Activated naive CD4-positive, alpha-beta T cell treated with anti-CD3 and anti-CD28 coated beads for 36 hours (primary cell): ENCODE measurements at regions of chr14 and their contacts with region 1.

Region 1: GRCh38 chr14:34982417-34983147 is at the start of gene SRP54:
- DNase-seq: peak; percentile 100
- H3K4me3 Mint-ChIP-seq: no peak within 1 kb of the TSS
- H3K27ac Mint-ChIP-seq: no peak within 1 kb of the TSS
- H3K4me1 Mint-ChIP-seq: peaks cover 38% of the 10 kb centered on the region
- H3K27me3 Mint-ChIP-seq: no peaks in the 10 kb centered on the region
- total RNA-seq, gene SRP54: 66.5 to 72.6 TPM

Region 2: DNA sequence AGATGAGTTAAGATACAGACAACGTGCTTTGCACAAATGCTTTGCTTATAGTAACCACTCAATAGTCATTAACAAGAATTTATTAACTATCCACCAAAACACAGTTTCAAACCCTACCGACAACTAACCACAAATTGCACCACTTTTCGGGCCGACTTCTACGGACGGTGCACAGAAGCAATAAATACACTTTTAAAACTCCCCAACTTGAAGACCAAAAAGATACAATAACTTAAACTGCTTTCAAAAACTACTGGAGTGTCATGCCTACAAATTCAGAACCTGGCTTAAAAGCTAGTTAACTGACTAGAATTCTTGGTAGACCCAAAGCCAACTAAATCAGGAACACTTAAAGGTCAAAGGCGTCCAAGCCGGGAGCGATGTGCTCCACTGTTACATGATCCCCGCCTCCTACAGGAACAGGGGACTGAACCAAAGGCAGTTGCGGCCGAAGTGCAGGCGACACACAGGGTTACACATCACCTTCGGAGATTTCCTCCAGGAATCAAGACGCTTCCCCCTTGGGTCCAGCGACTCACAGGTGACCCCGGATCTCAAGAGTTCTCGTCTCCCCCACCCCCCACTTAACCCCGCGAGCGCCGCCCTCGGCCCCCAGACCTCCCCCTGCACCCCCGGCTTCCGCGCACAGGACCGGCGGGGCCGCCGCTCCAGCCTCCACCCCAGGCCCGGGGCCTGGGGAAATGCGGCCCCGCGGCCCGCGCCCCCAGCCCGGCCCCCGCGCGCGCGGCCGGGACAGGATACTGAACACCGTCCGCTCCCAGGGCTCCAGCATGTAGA is 521.0 kb before region 1 on chr14:
- CTCF ChIA-PET with region 1: no interaction called
- intact Hi-C with region 1: loop called (anchors 5 kb)
- DNase-seq: peak; percentile 41
- H3K4me3 Mint-ChIP-seq: peak overlapping the region; percentile 87
- H3K27ac Mint-ChIP-seq: peak overlapping the region; percentile 65
- H3K4me1 Mint-ChIP-seq: peaks cover 16% of the 10 kb centered on the region
- H3K27me3 Mint-ChIP-seq: no peaks in the 10 kb centered on the region

Region 3: GRCh38 chr14:34714320-34715126 is 268.1 kb before region 1 on chr14 and contains the start of gene CFL2:
- CTCF ChIA-PET with region 1: no interaction called
- intact Hi-C with region 1: loop called (anchors 1 kb)
- DNase-seq: peak; percentile 75
- H3K4me3 Mint-ChIP-seq: peak within 1 kb of the TSS; percentile 81
- H3K27ac Mint-ChIP-seq: peak within 1 kb of the TSS; percentile 82
- H3K4me1 Mint-ChIP-seq: peaks cover 18% of the 10 kb centered on the region
- H3K27me3 Mint-ChIP-seq: no peaks in the 10 kb centered on the region
- total RNA-seq, gene CFL2: 3.1 to 4.5 TPM

Region 4: DNA sequence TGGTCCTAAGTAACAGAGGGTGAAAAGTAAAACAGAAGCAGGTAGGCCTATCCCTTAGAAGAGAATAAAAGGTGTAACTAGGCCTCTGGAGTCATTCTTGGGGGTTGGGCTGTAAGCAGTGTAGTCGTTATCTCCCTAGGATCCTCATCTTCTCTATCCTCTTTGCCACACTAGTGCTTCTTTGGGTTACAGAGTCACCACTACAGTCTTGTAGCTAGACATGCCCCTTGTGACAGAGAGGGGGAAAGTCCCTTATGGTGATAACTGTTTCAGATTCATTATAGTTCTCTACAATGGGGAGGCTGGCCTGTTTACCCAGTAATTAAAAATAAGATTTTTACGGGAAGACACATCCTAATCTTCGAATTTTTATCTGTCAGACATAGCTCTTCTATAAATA is 16.2 kb before region 1 on chr14:
- CTCF ChIA-PET with region 1: interaction called, 8 read pairs
- intact Hi-C with region 1: loop called (anchors 1 kb)
- DNase-seq: peak; percentile 43
- H3K4me3 Mint-ChIP-seq: no peak overlapping the region
- H3K27ac Mint-ChIP-seq: peak overlapping the region; percentile 57
- H3K4me1 Mint-ChIP-seq: peaks cover 23% of the 10 kb centered on the region
- H3K27me3 Mint-ChIP-seq: no peaks in the 10 kb centered on the region

Region 5: DNA sequence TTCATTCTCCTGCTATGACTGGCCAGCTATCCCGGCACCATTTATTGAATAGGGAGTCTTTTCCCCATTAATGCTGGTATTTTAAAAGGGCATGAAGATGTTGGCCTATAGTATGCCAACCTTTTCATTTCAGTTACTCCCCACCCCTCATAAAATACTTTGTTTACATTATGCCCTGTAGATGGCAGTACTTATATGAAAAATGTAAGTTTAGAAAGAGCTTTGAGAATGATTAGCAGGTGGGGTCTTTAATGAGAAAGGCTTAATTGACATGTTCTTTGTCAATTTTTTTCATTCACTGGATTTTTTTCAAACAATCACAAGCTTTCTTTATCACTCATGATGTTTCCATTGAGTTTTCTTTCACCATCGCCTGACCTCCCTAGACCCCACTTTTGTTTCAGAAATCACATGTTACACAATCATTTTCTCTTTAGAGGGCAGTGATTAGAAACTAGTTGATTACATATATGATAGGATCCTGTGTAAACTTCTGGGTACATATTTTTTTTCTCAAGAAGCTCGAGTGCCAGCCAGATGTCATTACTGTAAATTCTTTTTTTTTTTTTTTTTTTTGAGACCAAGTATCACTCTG is 247.0 kb after region 1 on chr14:
- CTCF ChIA-PET with region 1: no interaction called
- intact Hi-C with region 1: loop called (anchors 5 kb)
- DNase-seq: no peak
- H3K4me3 Mint-ChIP-seq: no peak overlapping the region
- H3K27ac Mint-ChIP-seq: peak overlapping the region; percentile 37
- H3K4me1 Mint-ChIP-seq: peaks cover 23% of the 10 kb centered on the region
- H3K27me3 Mint-ChIP-seq: no peaks in the 10 kb centered on the region

Region 6: DNA sequence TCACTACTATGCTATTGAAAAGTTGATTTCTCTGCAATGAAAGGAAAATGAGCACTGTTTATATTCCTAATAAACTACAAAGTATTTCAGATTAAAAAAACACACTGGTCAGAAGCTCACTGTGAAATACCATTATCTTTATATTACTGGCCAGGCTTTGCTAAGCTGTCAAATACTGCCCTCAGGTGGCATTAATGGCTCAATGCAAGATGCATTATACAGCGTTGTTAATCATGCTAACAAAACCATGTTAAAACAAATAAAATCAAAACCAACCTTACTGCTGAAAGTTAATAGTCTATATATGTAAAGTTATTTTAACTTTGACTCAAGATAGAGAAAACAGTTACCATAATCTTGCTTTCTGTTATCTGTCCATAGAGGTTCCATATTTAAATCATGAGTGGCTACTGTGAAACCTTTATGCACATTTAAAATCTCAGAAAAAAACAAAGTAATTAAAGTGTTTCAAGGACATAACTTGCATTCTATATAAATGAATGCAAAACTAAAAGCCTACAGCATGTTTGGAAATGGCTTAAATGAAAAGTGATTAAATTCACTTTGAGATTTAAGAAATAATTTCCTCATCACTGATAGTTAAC is 704.9 kb after region 1 on chr14:
- CTCF ChIA-PET with region 1: no interaction called
- intact Hi-C with region 1: loop called (anchors 10 kb)
- DNase-seq: peak; percentile 63
- H3K4me3 Mint-ChIP-seq: no peak overlapping the region
- H3K27ac Mint-ChIP-seq: no peak overlapping the region
- H3K4me1 Mint-ChIP-seq: peaks cover 16% of the 10 kb centered on the region
- H3K27me3 Mint-ChIP-seq: no peaks in the 10 kb centered on the region